ENCODE measurements at regions of chr1 and their contacts with region 1.

Region 1: GRCh38 chr1:147273409-147274336 is 31.2 kb downstream of the CHD1L start:
- DNase-seq: peak; percentile 9
- ATAC-seq: peak; percentile 81
- H3K4me3 ChIP-seq: no peak overlapping the region
- H3K27ac ChIP-seq: no peak overlapping the region
- H3K4me1 ChIP-seq: no peaks in the 10 kb centered on the region
- H3K27me3 ChIP-seq: no peaks in the 10 kb centered on the region
- CTCF ChIP-seq: peak; percentile 47 to 65 (median 61); a peak in 5 of 6 replicates
- EP300 ChIP-seq: no peak
- POLR2A ChIP-seq: no peak
- RAD21 ChIP-seq: peak; percentile 71

Region 2: DNA sequence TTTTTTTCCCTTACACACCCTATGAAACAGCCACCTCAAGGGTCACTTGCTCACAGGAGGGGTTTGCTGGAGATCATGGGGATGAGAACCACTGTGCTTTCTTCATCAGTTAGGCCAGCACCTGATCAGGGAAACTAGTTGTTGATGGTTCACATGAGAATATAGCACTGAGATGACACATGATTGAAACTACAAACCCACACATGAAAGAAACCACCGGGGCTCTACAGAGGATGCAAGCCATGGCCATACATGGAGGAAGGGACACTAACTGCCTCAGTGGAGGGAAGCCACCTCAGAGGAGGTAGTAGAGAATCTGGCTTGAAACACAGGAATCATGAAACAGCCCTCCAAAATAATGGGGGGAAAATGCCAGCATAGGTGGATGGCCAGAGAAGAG is 164.6 kb before region 1 on chr1:
- CTCF ChIA-PET with region 1: no interaction called
- POLR2A ChIA-PET with region 1: no interaction called
- RAD21 ChIA-PET with region 1: no interaction called
- SMC1A ChIA-PET with region 1: no interaction called
- in situ Hi-C with region 1: no loop called
- intact Hi-C with region 1: no loop called
- DNase-seq: peak; percentile 2
- ATAC-seq: peak; percentile 45
- H3K4me3 ChIP-seq: no peak overlapping the region
- H3K27ac ChIP-seq: no peak overlapping the region
- H3K4me1 ChIP-seq: no peaks in the 10 kb centered on the region; the same call in 1 of the 2 replicates
- H3K27me3 ChIP-seq: no peaks in the 10 kb centered on the region
- CTCF ChIP-seq: no peak
- EP300 ChIP-seq: no peak
- POLR2A ChIP-seq: no peak
- RAD21 ChIP-seq: no peak

Region 3: DNA sequence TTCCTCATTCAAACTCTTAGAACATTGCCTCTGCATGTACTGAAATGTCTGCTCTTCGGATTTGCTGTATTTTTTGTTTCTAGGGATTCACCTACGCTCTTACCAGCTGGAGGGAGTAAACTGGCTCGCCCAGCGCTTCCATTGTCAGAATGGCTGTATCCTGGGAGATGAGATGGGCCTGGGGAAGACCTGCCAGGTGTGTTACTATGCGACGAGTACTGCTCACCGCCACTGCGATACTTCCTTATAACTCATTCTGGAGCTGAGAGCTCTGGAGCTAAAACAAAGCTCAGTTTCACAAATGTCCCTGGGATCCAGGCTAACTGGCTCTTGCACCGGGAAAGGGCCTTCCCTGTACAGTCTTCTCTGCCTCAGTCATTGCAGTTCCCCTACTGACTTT is 21.1 kb before region 1 on chr1:
- CTCF ChIA-PET with region 1: interaction called, 20 read pairs
- POLR2A ChIA-PET with region 1: no interaction called
- RAD21 ChIA-PET with region 1: no interaction called
- SMC1A ChIA-PET with region 1: interaction called, 3 read pairs
- in situ Hi-C with region 1: no loop called
- intact Hi-C with region 1: no loop called
- DNase-seq: no peak
- ATAC-seq: no peak
- H3K4me3 ChIP-seq: no peak overlapping the region
- H3K27ac ChIP-seq: no peak overlapping the region
- H3K4me1 ChIP-seq: peaks cover 2% of the 10 kb centered on the region; the same call in 1 of the 2 replicates
- H3K27me3 ChIP-seq: no peaks in the 10 kb centered on the region
- CTCF ChIP-seq: no peak
- EP300 ChIP-seq: no peak
- POLR2A ChIP-seq: no peak
- RAD21 ChIP-seq: no peak

Region 4: DNA sequence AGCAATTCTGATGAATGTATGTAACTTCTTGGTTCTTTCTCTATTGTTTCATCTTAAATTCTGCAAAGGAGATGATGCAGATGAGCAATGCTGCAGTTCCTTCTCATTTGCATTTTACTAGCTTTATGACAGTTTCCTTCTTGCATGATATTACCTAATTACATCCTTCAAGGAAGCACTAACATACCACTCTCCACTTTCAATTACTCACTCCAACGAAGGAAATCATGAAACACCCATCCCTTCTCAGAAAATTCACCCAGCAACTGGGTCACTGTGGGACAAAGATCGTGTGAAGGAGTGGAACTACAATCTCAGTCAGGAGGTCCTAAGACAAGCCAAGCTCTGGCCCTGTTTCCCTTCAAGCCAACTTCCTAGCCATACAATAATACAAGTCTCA is 111.1 kb after region 1 on chr1:
- CTCF ChIA-PET with region 1: interaction called, 107 read pairs
- POLR2A ChIA-PET with region 1: interaction called, 3 read pairs
- RAD21 ChIA-PET with region 1: interaction called, 52 read pairs
- SMC1A ChIA-PET with region 1: interaction called, 48 read pairs
- in situ Hi-C with region 1: no loop called
- intact Hi-C with region 1: loop called (anchors 1 kb)
- DNase-seq: no peak
- ATAC-seq: no peak
- H3K4me3 ChIP-seq: no peak overlapping the region
- H3K27ac ChIP-seq: no peak overlapping the region
- H3K4me1 ChIP-seq: no peaks in the 10 kb centered on the region
- H3K27me3 ChIP-seq: no peaks in the 10 kb centered on the region
- CTCF ChIP-seq: no peak
- EP300 ChIP-seq: no peak
- POLR2A ChIP-seq: no peak
- RAD21 ChIP-seq: no peak

Region 5: DNA sequence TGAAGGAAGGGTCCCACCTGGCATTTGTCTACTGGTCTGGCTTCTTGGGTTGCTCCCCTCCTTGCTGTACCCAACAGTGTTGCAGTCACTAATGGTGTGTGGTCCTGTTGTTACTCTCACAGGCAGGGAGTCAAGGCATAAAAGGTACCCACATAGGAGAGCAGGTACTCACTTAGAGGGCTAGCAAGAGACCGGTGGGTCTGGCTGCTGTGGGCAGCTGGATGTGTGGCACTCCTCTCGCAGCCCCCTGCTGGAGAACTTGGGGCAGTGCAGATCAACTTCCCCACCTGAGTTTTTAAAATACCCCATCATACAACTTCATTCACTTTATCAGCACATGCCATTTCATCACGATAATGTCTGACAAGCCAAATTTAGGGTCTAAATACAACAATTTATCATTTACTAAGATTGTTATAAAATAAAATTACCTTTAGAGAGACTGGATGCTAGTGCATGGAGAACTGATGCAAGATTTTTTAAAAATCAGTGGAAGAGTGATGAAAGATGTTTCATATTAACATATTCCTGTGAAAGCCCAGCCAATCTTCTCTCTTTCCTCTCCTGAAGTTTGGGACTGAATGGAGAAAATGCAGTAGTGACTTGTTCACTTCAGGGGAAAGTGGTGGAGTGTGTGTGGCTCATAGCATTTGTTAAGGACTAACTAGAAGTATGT is 353.9 kb after region 1 on chr1:
- CTCF ChIA-PET with region 1: no interaction called
- POLR2A ChIA-PET with region 1: no interaction called
- RAD21 ChIA-PET with region 1: no interaction called
- SMC1A ChIA-PET with region 1: no interaction called
- in situ Hi-C with region 1: loop called (anchors 10 kb)
- intact Hi-C with region 1: loop called (anchors 5 kb)
- DNase-seq: no peak
- ATAC-seq: peak; percentile 92
- H3K4me3 ChIP-seq: no peak overlapping the region
- H3K27ac ChIP-seq: no peak overlapping the region
- H3K4me1 ChIP-seq: peaks cover 3% of the 10 kb centered on the region; the same call in 1 of the 2 replicates
- H3K27me3 ChIP-seq: no peaks in the 10 kb centered on the region
- CTCF ChIP-seq: peak; percentile 74 to 91 (median 84)
- EP300 ChIP-seq: no peak
- POLR2A ChIP-seq: no peak
- RAD21 ChIP-seq: peak; percentile 63